Ovary (tissue), 10 donors: ENCODE measurements at regions of chr7 and their contacts with region 1.

Region 1: GRCh38 chr7:33392148-33392547 is 262.8 kb downstream of the BBS9 start:
- DNase-seq: no peak
- H3K4me3 ChIP-seq: no peak overlapping the region
- H3K27ac ChIP-seq: no peak overlapping the region
- H3K4me1 ChIP-seq: no peaks in the 10 kb centered on the region
- H3K27me3 ChIP-seq: no peaks in the 10 kb centered on the region
- CTCF ChIP-seq: no peak
- EP300 ChIP-seq: no peak
- POLR2A ChIP-seq: no peak

Region 2: DNA sequence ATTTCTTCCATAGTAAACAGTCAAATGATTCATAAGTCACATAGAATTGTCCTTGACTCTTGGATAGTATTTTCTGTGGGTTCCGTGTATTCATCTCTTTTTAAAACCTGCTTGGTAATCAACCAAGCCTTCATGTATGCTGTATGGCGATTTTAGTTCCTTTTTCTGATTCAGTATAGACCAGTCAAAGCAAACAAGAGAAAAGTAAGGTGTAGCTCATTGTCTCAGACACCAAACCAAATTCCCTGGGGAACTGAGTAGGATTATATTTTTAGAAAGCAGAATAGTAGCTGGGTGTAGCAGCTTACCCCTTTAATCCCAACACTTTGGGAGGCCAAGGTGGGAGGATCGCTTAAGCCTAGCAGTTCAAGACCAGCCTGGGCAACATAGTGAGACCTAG is 22.3 kb before region 1 on chr7:
- intact Hi-C with region 1: no loop called
- DNase-seq: no peak
- H3K4me3 ChIP-seq: no peak overlapping the region
- H3K27ac ChIP-seq: no peak overlapping the region
- H3K4me1 ChIP-seq: no peaks in the 10 kb centered on the region
- H3K27me3 ChIP-seq: no peaks in the 10 kb centered on the region
- CTCF ChIP-seq: no peak
- EP300 ChIP-seq: no peak
- POLR2A ChIP-seq: no peak

Region 3: DNA sequence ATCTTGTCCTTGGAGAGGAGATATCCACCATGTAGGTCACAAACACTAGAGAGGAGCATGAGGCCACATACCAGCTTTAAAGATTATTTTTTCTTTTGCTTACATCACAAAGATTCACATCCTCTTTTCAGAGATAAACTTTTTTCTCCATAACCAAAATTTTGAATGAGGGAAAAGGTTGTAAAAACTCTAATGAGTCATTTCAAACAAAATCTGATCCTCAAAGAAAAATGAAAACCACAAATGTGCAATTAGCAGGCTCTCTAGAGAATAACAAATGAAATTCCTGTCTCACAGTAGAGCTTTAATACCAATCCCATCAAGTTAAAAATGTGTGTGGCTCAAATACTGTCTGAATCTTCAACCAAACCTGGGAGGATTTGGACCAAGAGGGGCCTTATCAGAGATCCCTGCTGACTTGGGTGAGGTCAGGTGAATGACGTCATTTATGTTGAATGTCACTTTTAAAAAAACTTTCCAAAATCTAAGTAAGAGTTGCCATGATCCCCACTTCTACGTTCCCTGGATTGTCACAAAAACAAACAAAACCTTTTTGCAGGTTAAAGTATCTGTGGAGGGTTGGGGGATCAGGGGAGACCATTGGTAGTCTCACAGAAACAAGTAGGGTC is 1004.4 kb after region 1 on chr7:
- intact Hi-C with region 1: loop called in 1 of 4 experiments (anchors 5 kb)
- DNase-seq: no peak
- H3K4me3 ChIP-seq: no peak overlapping the region
- H3K27ac ChIP-seq: no peak overlapping the region
- H3K4me1 ChIP-seq: no peaks in the 10 kb centered on the region
- H3K27me3 ChIP-seq: no peaks in the 10 kb centered on the region
- CTCF ChIP-seq: no peak
- EP300 ChIP-seq: no peak
- POLR2A ChIP-seq: no peak